Sigmoid colon (tissue), 7 donors: ENCODE measurements at regions of chr12 and their contacts with region 1.

Region 1: DNA sequence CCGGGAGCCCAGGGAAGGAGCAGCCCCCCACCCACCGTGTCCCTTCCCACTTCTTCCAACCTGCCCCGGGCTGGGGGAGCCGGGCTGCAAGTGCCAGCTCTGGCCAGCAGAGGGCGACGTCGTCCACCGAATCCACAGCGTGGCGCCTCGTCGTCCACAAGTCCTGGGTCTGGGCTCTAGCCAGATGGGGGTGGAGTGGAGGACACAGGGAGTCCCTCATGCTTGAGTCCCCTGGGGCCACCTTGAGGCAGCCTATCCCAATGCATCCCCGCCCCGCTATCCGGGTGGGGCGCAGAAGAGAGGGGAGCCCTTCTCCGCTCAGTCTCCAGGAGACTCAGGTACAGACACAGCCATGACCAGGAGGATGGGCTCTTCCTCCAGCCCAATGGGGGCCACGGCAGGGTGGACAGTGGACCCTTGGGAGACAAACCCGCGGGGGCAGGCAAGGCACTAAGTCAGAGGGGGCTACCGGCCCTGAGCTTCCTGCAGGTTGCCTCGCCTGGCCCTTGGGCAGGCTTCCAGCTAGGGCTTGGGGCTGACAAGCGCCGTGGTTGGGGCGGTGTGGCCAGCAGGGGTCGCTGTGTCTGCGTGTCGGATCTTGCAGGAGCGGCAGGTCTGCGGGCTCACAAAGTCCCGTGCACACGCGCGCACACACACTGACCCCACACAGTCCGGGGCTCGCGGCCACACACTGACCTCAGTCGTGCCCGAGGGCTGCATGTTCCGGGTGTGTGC is 5.5 kb downstream of the AQP5 start:
- DNase-seq: peak; percentile 96
- H3K4me3 ChIP-seq: peak overlapping the region; percentile 19 to 46 (median 41)
- H3K27ac ChIP-seq: peak overlapping the region in 1 of 4 donors; percentile 32
- H3K4me1 ChIP-seq: peaks cover 0 to 13% (median 10%) of the 10 kb centered on the region in 4 donors
- H3K27me3 ChIP-seq: peaks cover 0 to 19% (median 0%) of the 10 kb centered on the region in 3 donors
- CTCF ChIP-seq: peak; percentile 76 to 96 (median 92)
- EP300 ChIP-seq: no peak
- POLR2A ChIP-seq: no peak

Region 2: DNA sequence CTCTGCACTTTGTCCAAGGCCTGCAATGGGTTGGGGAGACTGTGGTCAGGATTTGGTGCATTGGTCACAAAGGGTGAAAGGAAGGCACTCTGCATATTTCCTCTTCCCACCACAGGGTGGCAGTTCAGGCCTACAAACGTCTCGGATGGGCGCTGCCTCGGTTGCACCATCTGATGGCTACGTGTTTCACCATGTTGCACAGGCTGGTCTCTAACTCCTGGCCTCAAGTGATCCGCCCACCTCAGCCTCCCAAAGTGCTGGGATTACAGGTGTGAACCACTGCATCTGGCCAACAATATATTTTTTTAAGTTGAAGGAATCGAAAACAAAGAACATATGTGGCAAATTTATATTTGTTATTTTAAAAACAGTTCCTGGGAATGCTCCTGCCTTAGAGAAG is 190.8 kb before region 1 on chr12:
- intact Hi-C with region 1: loop called (anchors 10 kb)
- DNase-seq: peak; percentile 84
- H3K4me3 ChIP-seq: no peak overlapping the region
- H3K27ac ChIP-seq: no peak overlapping the region
- H3K4me1 ChIP-seq: peaks cover 0 to 4% (median 0%) of the 10 kb centered on the region in 4 donors
- H3K27me3 ChIP-seq: no peaks in the 10 kb centered on the region
- CTCF ChIP-seq: peak; percentile 54 to 71 (median 66)
- EP300 ChIP-seq: no peak
- POLR2A ChIP-seq: no peak

Region 3: DNA sequence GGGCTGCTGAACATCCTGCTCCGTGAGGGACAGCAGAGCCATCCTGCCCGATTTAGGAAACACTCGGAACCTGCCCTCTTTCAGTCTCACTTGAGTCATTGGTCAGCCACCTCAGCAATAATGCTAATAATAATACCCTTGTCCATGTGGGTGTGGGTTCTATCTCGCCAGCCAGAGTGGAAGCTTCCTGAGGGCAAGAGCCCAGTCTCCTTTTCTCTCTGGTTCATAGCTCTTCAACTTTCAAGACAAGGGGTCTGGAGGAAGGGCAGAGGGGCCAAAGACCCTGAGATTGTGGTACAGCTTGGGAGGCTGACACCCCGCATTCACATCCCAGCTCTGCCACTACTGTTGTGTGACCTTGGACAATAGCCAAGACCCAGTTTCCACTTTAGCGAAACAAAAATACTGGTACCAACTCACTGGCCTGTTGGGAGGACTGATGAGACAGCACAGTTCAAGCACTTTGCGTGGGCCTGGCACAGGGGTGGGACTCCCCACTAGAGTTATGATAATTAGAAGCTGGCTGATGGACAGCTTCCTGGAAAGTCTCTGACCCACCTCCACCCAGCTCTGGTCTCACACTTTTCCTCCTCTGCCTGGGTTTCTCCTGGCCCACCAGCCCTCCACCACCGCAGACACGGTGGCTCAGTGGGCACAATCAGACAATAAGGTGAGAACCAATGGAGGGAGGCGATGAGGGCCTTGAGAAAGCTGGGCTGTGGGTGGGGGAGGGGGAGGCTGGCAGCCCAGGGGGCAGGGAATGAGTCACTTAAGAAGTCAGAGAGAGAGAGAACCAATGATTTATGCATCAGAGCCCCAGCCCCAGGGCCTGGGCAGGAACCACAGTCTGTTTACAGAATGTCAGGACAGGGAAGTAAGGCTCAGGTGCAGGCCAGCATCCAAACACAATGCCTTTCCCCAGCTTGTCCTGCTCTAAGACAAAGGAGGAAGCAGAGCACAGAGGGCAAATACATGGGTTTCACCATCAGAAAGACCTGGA is 73.2 kb before region 1 on chr12:
- intact Hi-C with region 1: no loop called
- DNase-seq: peak; percentile 26
- H3K4me3 ChIP-seq: no peak overlapping the region
- H3K27ac ChIP-seq: no peak overlapping the region
- H3K4me1 ChIP-seq: no peaks in the 10 kb centered on the region
- H3K27me3 ChIP-seq: no peaks in the 10 kb centered on the region
- CTCF ChIP-seq: no peak
- EP300 ChIP-seq: no peak
- POLR2A ChIP-seq: no peak

Region 4: GRCh38 chr12:50055831-50056638 is 88.8 kb after region 1 on chr12:
- intact Hi-C with region 1: loop called (anchors 1 kb)
- DNase-seq: no peak
- H3K4me3 ChIP-seq: peak overlapping the region in 1 of 4 donors; percentile 10
- H3K27ac ChIP-seq: no peak overlapping the region
- H3K4me1 ChIP-seq: peaks cover 0 to 32% (median 25%) of the 10 kb centered on the region in 4 donors
- H3K27me3 ChIP-seq: no peaks in the 10 kb centered on the region
- CTCF ChIP-seq: peak; percentile 86 to 99 (median 94)
- EP300 ChIP-seq: no peak
- POLR2A ChIP-seq: no peak

Region 5: GRCh38 chr12:50074936-50075807 is 108.0 kb after region 1 on chr12:
- intact Hi-C with region 1: loop called (anchors 1 kb)
- DNase-seq: peak; percentile 91
- H3K4me3 ChIP-seq: no peak overlapping the region
- H3K27ac ChIP-seq: no peak overlapping the region
- H3K4me1 ChIP-seq: peaks cover 0 to 13% (median 10%) of the 10 kb centered on the region in 4 donors
- H3K27me3 ChIP-seq: no peaks in the 10 kb centered on the region
- CTCF ChIP-seq: peak; percentile 88 to 93 (median 90)
- EP300 ChIP-seq: no peak
- POLR2A ChIP-seq: no peak

Region 6: DNA sequence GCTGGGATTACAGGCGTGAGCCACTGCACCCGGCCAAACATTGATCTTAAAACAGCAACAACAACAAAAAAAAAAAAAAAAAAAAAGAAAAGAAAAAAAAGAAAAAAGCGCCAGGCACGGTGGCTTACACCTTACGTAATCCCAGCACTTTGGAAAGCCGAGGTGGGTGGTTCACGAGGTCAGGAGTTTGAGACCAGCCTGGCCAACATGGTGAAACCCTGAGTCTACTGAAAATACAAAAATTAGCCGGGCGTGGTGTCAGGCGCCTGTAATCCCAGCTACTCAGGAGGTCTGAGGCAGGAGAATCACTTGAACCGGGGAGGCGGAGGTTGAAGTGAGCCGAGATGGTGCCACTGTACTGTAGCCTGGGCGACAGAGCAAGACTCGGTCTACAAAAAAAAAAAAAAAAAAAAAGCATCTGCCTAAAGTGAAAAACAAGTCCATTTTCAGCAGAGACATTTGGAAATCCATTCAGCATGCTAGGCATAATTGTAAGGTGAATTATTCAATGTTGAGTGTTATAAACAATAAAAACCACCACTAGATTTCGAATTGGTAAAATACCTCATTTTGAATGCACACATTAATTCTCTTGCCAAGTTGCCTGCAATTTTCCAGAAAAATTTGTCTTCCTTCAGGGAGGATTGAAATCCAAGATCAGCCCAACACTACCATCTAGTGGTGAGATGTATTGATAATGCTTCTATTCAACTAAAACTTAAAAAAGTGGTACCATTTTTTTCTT is 207.9 kb after region 1 on chr12:
- intact Hi-C with region 1: loop called (anchors 5 kb)
- DNase-seq: no peak
- H3K4me3 ChIP-seq: no peak overlapping the region
- H3K27ac ChIP-seq: peak overlapping the region in 2 of 4 donors; percentile 1 to 32
- H3K4me1 ChIP-seq: no peaks in the 10 kb centered on the region
- H3K27me3 ChIP-seq: no peaks in the 10 kb centered on the region
- CTCF ChIP-seq: peak; percentile 45 to 70 (median 62)
- EP300 ChIP-seq: no peak
- POLR2A ChIP-seq: no peak